ENCODE measurements at regions of chr1 and their contacts with region 1.

Region 1: GRCh38 chr1:181430015-181430885 is 53.1 kb upstream of the CACNA1E start:
- DNase-seq: peak; percentile 35
- CTCF ChIP-seq: no peak

Region 2: GRCh38 chr1:181318022-181318857 is 112.0 kb before region 1 on chr1:
- CTCF ChIA-PET with region 1: no interaction called
- POLR2A ChIA-PET with region 1: no interaction called
- DNase-seq: no peak
- CTCF ChIP-seq: no peak

Region 3: DNA sequence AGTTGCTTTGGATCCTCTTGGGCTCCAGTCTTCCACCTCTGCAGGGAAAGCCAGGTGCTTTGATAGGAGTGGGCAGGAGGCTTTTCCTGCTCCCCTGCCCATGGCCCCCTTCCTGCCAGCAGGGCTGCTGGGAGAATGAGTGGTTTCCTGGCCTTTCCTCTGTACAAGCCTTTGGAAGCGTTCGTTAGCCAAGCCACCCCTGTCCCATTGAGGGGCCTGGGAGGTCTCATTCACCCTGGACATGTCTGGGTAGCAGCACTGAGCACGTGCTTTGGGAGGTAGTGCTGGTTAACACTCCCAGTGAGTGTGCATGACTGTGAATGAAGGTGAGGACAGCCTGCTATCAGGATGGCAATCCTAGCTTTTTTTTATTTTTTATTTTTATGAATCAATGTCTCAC is 65.4 kb before region 1 on chr1:
- CTCF ChIA-PET with region 1: no interaction called
- POLR2A ChIA-PET with region 1: no interaction called
- DNase-seq: no peak
- CTCF ChIP-seq: no peak

Region 4: DNA sequence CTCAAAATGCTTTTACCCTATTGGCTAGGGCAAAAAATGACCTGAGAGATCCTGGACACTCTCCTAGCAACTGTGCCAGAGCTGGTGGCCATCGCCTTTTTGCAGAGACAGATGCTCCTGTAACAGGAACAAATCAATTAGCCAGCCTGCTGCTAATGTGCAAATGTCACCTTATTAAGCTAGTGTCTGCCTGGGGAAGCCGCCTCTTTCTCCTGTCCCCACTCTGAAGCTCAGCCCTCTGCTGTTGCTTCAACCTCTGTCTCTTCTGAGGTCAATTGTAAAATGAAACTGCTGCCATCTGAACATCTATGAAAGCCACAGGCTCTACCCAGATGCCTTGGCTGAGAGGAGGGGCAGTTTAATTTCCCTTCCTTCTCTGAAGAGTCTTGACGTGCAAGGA is 32.4 kb before region 1 on chr1:
- CTCF ChIA-PET with region 1: interaction called, 50 read pairs
- POLR2A ChIA-PET with region 1: interaction called, 3 read pairs
- DNase-seq: peak; percentile 54
- CTCF ChIP-seq: no peak

Region 5: GRCh38 chr1:181443231-181443853 is 13.1 kb after region 1 on chr1:
- CTCF ChIA-PET with region 1: interaction called, 40 read pairs
- POLR2A ChIA-PET with region 1: no interaction called
- DNase-seq: no peak
- CTCF ChIP-seq: no peak

Region 6: DNA sequence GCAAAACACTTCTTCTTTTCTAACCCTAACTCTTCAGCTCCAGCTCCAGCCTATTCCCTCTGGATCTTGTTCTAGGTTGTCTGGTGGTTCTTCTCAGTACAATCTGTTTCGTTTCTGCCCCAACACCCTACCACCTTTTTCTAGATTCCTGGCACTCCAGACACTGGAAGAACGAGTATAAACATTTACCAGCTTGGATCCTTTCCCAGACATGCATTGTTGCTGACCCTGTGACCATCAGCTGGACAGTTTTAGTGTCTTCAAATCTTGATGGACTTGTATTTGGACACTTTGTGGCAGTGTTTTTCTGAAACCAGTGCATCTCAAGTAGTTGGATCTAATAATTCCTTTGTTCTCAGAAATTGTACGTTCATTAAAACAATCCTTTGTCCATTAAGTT is 22.5 kb after region 1 on chr1:
- CTCF ChIA-PET with region 1: interaction called, 36 read pairs
- POLR2A ChIA-PET with region 1: no interaction called
- DNase-seq: no peak
- CTCF ChIP-seq: no peak

Region 7: DNA sequence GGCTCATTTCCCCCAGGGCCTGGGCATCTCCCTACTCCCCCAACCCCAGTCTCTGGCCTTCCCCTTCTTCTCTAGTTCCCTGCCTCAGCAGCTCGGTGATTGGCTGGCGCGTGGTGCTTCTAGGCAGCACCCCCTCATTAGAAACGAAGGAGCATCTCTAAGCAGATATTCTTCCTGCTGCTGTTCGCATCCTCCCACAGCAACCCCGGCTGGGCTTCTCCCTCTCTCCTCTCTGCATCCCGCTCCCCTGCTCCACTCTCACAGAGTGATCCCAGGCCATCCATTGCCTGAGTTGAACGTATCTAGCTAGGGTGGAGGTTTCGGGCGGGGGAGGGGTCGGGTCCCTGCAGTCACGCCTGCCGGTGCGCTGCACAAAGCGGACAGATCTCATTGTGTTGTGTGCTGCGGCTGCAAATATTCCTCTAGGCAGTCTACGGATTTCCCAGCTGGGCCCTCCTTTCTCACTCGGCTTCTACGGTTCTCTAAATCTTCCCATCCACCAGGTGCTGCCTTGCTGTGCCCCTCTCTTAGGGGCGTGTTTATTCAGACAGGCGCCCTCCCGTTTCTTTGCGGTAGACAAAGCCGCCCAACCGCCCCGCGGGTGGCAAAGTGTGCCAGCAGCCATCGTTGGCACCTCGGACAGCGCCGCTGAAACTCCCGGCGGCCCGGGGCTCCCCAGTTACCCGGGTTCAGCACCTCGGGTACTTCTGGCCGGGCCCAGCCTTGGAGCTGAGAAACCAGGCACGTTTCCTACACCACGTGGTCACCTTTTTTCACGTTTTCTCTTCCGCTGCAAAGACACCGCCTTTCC is 55.2 kb after region 1 on chr1:
- CTCF ChIA-PET with region 1: interaction called, 12 read pairs
- POLR2A ChIA-PET with region 1: no interaction called
- DNase-seq: peak; percentile 79
- CTCF ChIP-seq: no peak